IMR-90 (cell line): ENCODE measurements at regions of chr18 and their contacts with region 1.

Region 1: DNA sequence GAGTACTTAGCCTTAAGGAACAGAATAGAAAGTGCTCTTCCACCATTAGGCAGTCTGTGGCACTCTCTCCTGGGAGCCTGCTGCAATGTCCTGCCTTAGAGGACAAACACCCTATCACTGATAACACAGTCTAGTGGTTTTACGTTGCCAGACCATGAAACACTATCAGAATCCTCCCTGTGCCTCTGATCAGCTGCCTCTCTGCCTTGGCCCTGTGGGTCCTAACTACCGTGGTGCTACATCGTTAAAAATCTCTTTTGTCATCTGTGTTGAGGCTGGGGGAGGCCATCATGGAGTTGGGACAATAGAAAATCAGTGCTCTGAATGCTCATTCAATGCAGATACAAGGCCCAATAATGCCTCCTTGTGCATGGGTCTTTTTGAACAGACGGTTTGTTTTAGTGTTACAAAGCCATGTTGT is 11.9 kb upstream of the APCDD1 start:
- DNase-seq: no peak
- ATAC-seq: no peak
- H3K4me3 ChIP-seq: no peak overlapping the region
- H3K27ac ChIP-seq: no peak overlapping the region
- H3K4me1 ChIP-seq: peaks cover 8% of the 10 kb centered on the region; the same call in 1 of the 2 replicates
- H3K27me3 ChIP-seq: peaks cover 34% of the 10 kb centered on the region
- CTCF ChIP-seq: peak; percentile 19; the same call in 1 of the 2 replicates
- POLR2A ChIP-seq: no peak
- RAD21 ChIP-seq: peak; percentile 24; the same call in 1 of the 2 replicates

Region 2: GRCh38 chr18:10312326-10313015 is 130.1 kb before region 1 on chr18:
- CTCF ChIA-PET with region 1: no interaction called
- POLR2A ChIA-PET with region 1: no interaction called
- dilution Hi-C with region 1: no loop called
- in situ Hi-C with region 1: no loop called
- intact Hi-C with region 1: no loop called
- DNase-seq: no peak
- ATAC-seq: no peak
- H3K4me3 ChIP-seq: no peak overlapping the region
- H3K27ac ChIP-seq: no peak overlapping the region
- H3K4me1 ChIP-seq: no peaks in the 10 kb centered on the region
- H3K27me3 ChIP-seq: peaks cover 3% of the 10 kb centered on the region; the same call in 1 of the 2 replicates
- CTCF ChIP-seq: no peak
- POLR2A ChIP-seq: no peak
- RAD21 ChIP-seq: no peak

Region 3: DNA sequence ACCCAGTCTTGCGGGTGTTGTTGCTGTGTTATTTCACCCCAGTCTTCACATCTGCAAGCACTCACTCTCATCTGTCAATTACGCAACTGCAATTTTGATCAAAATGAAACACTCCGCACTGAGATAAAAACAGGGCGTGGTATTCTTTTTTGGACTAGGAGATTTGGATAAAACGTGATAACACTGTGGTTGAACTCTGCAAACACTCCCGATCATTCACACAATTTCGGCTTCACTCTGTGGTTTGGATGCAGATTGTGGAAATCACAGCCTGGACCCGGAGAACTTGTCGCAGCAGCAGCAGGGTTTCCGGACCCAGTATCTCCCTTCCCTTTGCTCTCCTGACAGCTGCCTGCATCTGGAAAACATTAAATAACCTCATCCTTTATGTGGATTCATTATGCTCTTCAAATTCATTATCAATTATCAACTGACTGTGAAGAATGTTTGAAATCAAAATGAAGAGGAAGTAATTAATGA is 37.5 kb before region 1 on chr18:
- CTCF ChIA-PET with region 1: no interaction called
- POLR2A ChIA-PET with region 1: interaction called, 19 read pairs
- dilution Hi-C with region 1: no loop called
- in situ Hi-C with region 1: no loop called
- intact Hi-C with region 1: no loop called
- DNase-seq: no peak
- ATAC-seq: no peak
- H3K4me3 ChIP-seq: no peak overlapping the region
- H3K27ac ChIP-seq: no peak overlapping the region
- H3K4me1 ChIP-seq: no peaks in the 10 kb centered on the region
- H3K27me3 ChIP-seq: peaks cover 16% of the 10 kb centered on the region
- CTCF ChIP-seq: no peak
- POLR2A ChIP-seq: no peak
- RAD21 ChIP-seq: no peak